Heart right ventricle (tissue), 16 donors: ENCODE measurements at regions of chr1 and their contacts with region 1.

Region 1: GRCh38 chr1:107529502-107530149 is 388.8 kb downstream of the NTNG1 start:
- DNase-seq: no peak
- ATAC-seq: peak in 1 of 8 donors; percentile 35
- H3K4me3 ChIP-seq: no peak overlapping the region
- H3K27ac ChIP-seq: no peak overlapping the region
- H3K4me1 ChIP-seq: peaks cover 0 to 8% (median 0%) of the 10 kb centered on the region in 9 donors
- H3K27me3 ChIP-seq: peaks cover 0 to 13% (median 0%) of the 10 kb centered on the region in 7 donors
- CTCF ChIP-seq: peak; percentile 7 to 72 (median 54)

Region 2: GRCh38 chr1:107277022-107277421 is 252.6 kb before region 1 on chr1:
- intact Hi-C with region 1: loop called in 2 of 10 experiments (anchors 10 kb)
- DNase-seq: peak in 1 of 2 donors; percentile 5
- ATAC-seq: no peak
- H3K4me3 ChIP-seq: no peak overlapping the region
- H3K27ac ChIP-seq: no peak overlapping the region
- H3K4me1 ChIP-seq: no peaks in the 10 kb centered on the region
- H3K27me3 ChIP-seq: no peaks in the 10 kb centered on the region
- CTCF ChIP-seq: peak in 7 of 9 donors; percentile 21 to 49 (median 33)

Region 3: GRCh38 chr1:107286125-107286524 is 243.5 kb before region 1 on chr1:
- intact Hi-C with region 1: loop called in 1 of 10 experiments (anchors 10 kb)
- DNase-seq: no peak
- ATAC-seq: no peak
- H3K4me3 ChIP-seq: no peak overlapping the region
- H3K27ac ChIP-seq: no peak overlapping the region
- H3K4me1 ChIP-seq: no peaks in the 10 kb centered on the region
- H3K27me3 ChIP-seq: no peaks in the 10 kb centered on the region
- CTCF ChIP-seq: no peak